HCT116 (cell line): ENCODE measurements at regions of chr6 and their contacts with region 1.

Region 1: DNA sequence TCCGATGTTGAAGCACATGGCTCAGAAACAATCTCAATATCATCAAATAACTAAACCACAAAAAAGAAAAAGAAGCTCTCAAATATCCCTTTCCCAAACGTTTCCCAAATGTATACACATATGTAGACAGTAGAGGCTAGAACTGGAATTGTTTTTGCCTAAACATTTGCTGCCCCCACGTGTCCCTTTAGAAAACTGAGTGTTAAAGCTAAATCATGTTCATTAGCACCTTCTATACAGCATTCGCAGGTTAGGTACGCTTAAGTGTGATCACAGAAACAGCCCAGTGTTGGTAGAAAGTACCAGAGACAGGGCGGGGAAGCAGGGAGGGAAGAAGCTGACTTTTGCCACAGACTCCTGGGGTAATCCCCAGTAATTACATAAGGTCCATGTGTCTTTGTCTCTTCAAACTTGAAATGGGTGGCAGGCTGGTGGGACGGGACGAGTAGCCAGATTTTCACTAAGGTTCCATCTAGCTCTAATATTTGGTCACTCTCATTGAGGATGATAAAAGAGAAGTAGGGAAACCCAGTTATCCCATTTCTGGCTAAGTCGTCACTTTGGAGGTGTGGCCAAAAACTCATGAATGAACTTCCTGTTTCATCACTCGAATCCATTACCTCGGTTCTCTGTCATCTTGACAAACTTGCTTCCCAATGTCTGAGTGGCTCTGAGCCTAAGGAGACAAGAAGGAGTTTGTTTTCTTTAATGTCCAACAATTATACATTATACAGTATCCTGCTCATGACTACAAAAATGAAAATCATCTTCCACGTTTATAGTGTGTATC is 15.0 kb upstream of the TFAP2A start:
- DNase-seq: no peak
- ATAC-seq: peak; percentile 85
- H3K4me3 ChIP-seq: peak overlapping the region in 1 of 2 experiments; percentile 28; a peak in 1 of 4 replicates
- H3K27ac ChIP-seq: no peak overlapping the region
- H3K4me1 ChIP-seq: peaks cover 10 to 35% of the 10 kb centered on the region in 2 experiments; a peak in 3 of 4 replicates
- H3K27me3 ChIP-seq: no peaks in the 10 kb centered on the region
- CTCF ChIP-seq: peak; percentile 46 to 76 (median 74); a peak in 5 of 6 replicates
- POLR2A ChIP-seq: peak; percentile 32
- RAD21 ChIP-seq: peak; percentile 94

Region 2: DNA sequence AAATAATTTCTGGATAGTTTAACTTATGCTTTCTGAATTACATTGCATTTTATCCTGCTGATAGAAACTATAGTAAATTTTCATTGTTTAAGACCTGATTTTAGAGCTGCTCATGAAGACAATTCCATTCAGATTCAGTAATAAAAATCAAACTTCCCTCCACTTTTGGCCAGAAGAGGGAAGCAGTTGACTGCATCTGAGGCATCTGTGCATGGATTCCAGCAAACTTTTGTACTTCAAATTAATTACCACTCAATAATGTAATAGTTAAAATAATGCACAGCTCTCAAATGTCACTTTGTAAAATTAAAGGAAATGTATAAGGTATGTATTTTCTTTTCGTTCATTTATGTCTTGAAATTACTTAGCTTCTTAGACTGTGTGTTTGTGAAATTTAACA is 1930.3 kb before region 1 on chr6:
- CTCF ChIA-PET with region 1: interaction called, 7 read pairs
- POLR2A ChIA-PET with region 1: no interaction called
- RAD21 ChIA-PET with region 1: no interaction called
- intact Hi-C with region 1: loop called (anchors 1 kb)
- DNase-seq: peak; percentile 13
- ATAC-seq: peak; percentile 58; the same call in 1 of the 2 replicates
- H3K4me3 ChIP-seq: no peak overlapping the region
- H3K27ac ChIP-seq: no peak overlapping the region
- H3K4me1 ChIP-seq: no peaks in the 10 kb centered on the region
- H3K27me3 ChIP-seq: no peaks in the 10 kb centered on the region
- CTCF ChIP-seq: peak; percentile 33 to 69 (median 41); a peak in 5 of 6 replicates
- POLR2A ChIP-seq: no peak
- RAD21 ChIP-seq: peak; percentile 75

Region 3: GRCh38 chr6:9250852-9251251 is 1179.0 kb before region 1 on chr6:
- CTCF ChIA-PET with region 1: interaction called, 7 read pairs
- POLR2A ChIA-PET with region 1: no interaction called
- RAD21 ChIA-PET with region 1: no interaction called
- intact Hi-C with region 1: loop called (anchors 2 kb)
- DNase-seq: peak; percentile 63
- ATAC-seq: peak; percentile 97
- H3K4me3 ChIP-seq: no peak overlapping the region
- H3K27ac ChIP-seq: no peak overlapping the region
- H3K4me1 ChIP-seq: no peaks in the 10 kb centered on the region
- H3K27me3 ChIP-seq: no peaks in the 10 kb centered on the region
- CTCF ChIP-seq: peak; percentile 71 to 78 (median 73)
- POLR2A ChIP-seq: no peak
- RAD21 ChIP-seq: peak; percentile 94

Region 4: DNA sequence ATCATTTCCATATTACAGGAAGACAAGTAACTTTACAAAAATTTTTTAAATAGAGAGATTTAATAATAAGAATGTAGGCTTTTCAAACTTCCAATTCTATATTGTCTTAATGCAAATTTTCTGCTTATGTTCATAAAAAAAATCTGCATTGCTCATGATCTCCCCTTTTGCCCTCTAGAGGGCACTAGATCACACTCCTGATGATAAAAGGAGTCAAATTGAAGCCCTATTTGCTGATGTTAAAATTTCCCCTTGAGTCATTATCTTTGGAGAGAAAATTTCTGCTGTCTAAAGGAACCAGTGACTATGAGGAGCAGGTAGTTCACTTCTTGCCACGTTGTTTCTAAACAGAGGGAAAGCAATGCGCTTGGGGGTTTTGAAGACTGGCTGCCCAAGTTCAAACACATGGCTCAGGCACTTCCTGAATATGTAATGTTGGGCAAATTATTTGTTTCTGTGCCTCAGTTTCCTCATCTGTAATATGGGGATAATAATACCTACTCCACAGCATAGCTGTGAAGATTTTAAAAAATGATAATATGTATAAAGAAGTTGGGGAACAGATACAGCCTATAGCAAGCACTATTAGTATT is 889.2 kb before region 1 on chr6:
- CTCF ChIA-PET with region 1: no interaction called
- POLR2A ChIA-PET with region 1: no interaction called
- RAD21 ChIA-PET with region 1: no interaction called
- intact Hi-C with region 1: loop called (anchors 5 kb)
- DNase-seq: peak; percentile 47
- ATAC-seq: peak; percentile 67; the same call in 1 of the 2 replicates
- H3K4me3 ChIP-seq: no peak overlapping the region
- H3K27ac ChIP-seq: no peak overlapping the region
- H3K4me1 ChIP-seq: 0 out of 4 replicates have a peak, but pooled peaks cover 0 to 6% of the 10 kb centered on the region in 2 experiments
- H3K27me3 ChIP-seq: no peaks in the 10 kb centered on the region
- CTCF ChIP-seq: peak; percentile 47 to 81 (median 65); a peak in 4 of 6 replicates
- POLR2A ChIP-seq: no peak
- RAD21 ChIP-seq: peak; percentile 64